Aorta (tissue), 5 donors: ENCODE measurements at regions of chr2 and their contacts with region 1.

Region 1: DNA sequence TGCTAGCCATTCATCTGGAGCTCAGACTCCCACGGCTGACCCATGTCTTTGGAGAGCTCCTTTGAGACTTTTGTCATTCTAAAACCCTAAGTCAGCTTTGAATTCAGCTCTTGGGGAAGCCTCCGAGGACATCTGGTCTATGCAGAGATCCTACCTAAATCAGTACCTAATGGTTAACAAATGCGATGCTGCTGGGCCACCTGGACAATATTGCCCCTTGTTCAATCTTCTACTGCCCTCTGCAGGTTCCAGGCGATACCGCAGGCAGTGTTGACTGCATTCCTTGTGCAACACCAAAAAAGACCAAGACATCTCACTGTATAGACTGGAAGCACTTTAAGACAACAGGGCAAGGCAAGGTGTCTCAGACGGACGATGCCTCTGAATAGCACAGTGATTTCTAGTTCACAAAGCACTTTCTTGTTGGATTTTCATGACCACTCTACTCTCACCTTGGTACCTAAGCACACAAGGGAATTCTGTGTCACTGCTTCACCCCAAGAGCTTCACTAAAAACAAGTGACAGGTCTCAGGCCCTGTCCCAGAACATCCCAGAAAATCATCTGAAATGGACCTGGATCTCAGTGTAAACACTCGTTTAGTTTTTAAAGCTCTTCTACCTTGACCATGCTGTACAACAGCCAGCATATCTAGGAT is 80.9 kb downstream of the XDH start:
- DNase-seq: peak; percentile 84 to 91
- ATAC-seq: peak; percentile 79
- H3K4me3 ChIP-seq: no peak overlapping the region
- H3K27ac ChIP-seq: no peak overlapping the region
- H3K4me1 ChIP-seq: no peaks in the 10 kb centered on the region
- H3K27me3 ChIP-seq: no peaks in the 10 kb centered on the region

Region 2: DNA sequence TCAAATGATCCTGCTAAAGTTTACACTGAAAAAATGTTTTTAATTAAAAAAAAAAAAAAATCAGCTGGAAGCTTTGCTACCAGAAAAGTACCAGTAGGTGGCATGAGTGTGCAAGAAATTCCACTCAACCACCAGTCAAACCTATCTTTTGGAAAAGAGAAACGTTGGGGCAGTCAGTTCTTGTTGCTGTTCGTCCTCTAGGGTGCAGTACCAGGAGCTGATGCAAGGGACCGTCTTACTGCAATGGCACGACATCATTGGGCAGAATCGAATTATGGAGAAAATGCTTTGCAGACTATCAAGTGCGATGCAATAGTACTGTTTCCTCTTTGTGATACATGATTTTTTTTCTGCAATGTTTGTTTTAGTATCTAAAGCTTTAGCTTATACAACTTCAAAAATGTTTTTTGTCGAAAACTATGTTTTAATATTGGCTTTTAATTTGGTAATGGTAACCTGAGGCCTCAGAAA is 1168.6 kb before region 1 on chr2:
- intact Hi-C with region 1: loop called in 1 of 2 experiments (anchors 10 kb)
- DNase-seq: no peak
- ATAC-seq: peak; percentile 88
- H3K4me3 ChIP-seq: no peak overlapping the region
- H3K27ac ChIP-seq: no peak overlapping the region
- H3K4me1 ChIP-seq: no peaks in the 10 kb centered on the region
- H3K27me3 ChIP-seq: no peaks in the 10 kb centered on the region

Region 3: GRCh38 chr2:30979822-30980245 is 353.8 kb before region 1 on chr2:
- intact Hi-C with region 1: loop called (anchors 10 kb)
- DNase-seq: peak; percentile 87 to 91
- ATAC-seq: peak; percentile 85
- H3K4me3 ChIP-seq: no peak overlapping the region
- H3K27ac ChIP-seq: peak overlapping the region in 1 of 2 donors; percentile 11
- H3K4me1 ChIP-seq: no peaks in the 10 kb centered on the region
- H3K27me3 ChIP-seq: no peaks in the 10 kb centered on the region

Region 4: DNA sequence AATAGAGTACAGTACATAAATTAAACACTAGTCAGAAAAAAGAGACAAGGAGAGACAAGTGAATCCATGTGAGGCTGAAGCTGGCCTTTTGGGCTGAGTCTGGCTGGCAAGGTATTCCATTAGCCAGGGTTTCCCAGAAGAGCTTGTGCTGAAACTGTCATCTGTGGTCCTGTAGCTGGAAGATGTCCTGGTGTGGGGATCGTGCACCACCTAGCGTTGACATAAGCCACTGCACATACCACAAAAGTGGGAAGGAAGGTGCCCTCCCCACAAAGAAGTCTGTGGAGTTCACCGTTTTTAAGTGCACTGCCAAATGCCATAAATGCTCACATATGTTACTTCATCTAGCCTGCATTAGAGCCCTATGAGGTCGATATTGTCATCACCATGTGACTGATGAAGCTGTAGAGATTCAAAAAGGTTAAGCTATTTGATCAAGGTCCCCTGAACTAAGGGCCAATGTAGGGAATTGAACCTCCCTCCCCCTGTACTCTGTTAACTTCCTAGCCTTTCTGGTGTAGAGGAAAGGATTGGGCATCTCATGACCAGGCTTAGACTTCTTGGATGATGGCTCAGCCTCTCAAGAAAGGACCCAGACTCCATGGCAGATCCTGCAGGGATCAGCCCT is 163.5 kb before region 1 on chr2:
- intact Hi-C with region 1: loop called (anchors 5 kb)
- DNase-seq: peak; percentile 61 to 81
- ATAC-seq: peak; percentile 83
- H3K4me3 ChIP-seq: no peak overlapping the region
- H3K27ac ChIP-seq: no peak overlapping the region
- H3K4me1 ChIP-seq: peaks cover 0 to 2% of the 10 kb centered on the region in 2 donors
- H3K27me3 ChIP-seq: no peaks in the 10 kb centered on the region

Region 5: DNA sequence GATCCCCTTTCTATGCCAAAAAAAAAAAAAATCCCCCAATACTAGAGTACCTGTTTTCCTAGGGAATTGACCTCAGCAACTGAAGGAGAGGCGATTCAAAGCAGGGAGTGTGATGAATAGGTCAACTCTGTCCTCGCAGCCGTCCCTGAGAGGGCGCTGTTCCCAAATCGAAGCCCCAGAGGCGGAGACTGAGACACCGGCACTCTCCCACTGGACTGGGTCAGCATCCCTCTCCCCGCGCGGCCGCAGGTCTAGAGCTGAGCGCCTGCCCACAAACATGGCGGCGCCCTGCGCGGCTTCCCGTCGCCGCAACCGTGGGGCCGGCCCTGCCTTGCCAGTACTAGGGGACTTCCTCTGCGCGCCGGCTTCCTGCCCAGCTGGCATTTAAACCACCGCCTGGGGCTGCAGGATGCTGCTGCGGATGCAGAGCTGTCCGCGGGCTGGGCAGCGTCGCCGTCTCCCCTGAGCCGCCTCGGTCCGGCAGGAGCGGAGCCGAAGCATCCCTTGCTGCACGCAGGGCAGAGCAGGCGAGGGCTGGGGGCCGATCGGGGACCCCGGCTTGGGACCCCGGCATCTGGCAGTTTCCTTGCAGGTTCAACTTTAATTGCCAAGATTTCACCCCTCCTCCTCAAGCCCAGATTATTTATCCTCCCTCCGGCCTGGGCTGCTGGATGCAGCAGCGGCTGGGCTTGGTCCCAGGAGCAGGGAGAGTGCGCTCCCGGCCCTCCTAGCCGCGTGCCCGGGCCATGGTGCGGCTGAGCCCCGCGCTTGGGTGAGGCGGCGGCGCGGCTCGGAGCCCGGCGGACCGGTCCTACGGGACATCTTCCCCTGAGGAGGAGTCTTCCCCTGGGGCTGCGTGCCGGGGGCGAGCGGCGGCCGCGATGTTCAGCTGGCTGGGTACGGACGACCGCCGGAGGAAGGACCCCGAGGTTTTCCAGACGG is 99.6 kb before region 1 on chr2 and contains the start of gene EHD3:
- intact Hi-C with region 1: loop called (anchors 1 to 2 kb)
- DNase-seq: peak; percentile 93 to 95
- ATAC-seq: peak; percentile 95
- H3K4me3 ChIP-seq: peak within 1 kb of the TSS; percentile 32 to 56
- H3K27ac ChIP-seq: peak within 1 kb of the TSS in 1 of 2 donors; percentile 24
- H3K4me1 ChIP-seq: no peaks in the 10 kb centered on the region
- H3K27me3 ChIP-seq: no peaks in the 10 kb centered on the region
- total RNA-seq, gene EHD3: 19.8 to 28.8 TPM

Region 6: GRCh38 chr2:31297751-31298150 is 35.9 kb before region 1 on chr2:
- intact Hi-C with region 1: loop called in 1 of 2 experiments (anchors 5 kb)
- DNase-seq: no peak
- ATAC-seq: no peak
- H3K4me3 ChIP-seq: no peak overlapping the region
- H3K27ac ChIP-seq: peak overlapping the region; percentile 58 to 99
- H3K4me1 ChIP-seq: peaks cover 8 to 16% of the 10 kb centered on the region in 2 donors
- H3K27me3 ChIP-seq: no peaks in the 10 kb centered on the region